ENCODE measurements at regions of chr11 and their contacts with region 1.

Region 1: DNA sequence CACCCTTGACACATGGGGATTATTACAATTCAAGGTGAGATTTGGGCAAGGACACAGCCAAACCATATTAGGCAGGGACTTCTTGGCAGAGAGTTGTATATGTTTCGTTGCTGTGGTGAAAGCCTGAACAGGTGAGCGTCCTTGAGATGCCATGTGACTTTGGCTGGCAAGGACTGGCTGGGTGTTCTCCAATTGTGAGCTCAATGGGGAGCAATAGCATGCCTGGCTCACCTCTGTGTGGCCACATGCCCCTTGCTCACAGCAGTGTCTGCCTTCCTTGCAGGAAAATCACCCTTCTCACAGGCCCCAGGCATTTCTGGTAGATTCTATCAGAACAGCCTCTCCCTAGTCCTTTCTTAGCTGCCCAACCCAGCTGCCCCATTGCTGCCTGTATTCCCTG is 105.5 kb downstream of the PARVA start:
- DNase-seq: no peak
- H3K4me3 ChIP-seq: no peak overlapping the region
- CTCF ChIP-seq: no peak

Region 2: GRCh38 chr11:12361682-12362081 is 121.2 kb before region 1 on chr11:
- in situ Hi-C with region 1: no loop called
- DNase-seq: no peak
- H3K4me3 ChIP-seq: no peak overlapping the region
- CTCF ChIP-seq: no peak

Region 3: DNA sequence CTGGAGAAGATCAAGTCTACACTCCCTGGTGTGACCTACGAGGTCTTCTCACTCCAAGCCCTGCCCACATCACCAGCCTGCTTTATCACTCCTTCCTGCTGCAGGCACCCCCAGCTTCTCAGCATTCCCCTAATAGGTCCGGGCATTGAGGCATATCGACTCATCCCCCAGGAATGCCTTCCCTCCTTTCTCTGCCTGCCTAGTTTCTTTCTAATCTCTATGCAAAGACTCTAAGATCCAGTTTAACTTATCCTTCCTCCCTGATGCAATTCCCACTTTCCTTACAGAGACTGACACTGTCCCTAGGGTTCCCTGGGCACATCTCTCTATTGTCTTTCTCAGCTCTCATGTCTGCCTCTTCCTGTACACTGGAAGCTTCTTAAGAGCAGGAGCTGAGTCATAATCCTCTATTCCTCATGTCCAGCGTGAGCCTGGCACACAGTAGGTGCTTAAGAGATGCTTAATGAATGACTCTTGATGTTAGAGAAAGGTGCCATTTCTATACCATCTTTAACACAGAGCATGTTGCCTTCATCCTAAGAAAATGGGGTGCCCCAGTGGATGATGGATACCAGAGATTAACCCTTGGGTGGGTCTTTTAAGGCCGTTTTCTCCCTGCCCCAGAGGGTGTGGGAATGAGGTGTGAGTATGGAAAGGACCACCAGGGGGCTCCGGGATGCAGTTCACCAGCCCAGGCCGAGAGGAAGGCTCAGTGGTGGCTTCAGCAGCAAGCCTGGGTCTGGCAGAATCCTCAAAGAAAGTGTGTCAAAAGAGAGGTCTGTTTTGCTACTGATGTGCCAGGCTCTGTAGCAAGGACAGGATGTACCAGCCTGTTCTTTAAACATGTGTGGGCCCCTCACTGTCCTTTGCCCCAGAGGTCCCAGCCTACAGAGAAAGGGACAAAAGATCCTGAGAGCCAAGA is 70.8 kb before region 1 on chr11:
- in situ Hi-C with region 1: loop called (anchors 5 kb)
- DNase-seq: peak; percentile 73
- H3K4me3 ChIP-seq: no peak overlapping the region
- CTCF ChIP-seq: peak; percentile 85

Measured in astrocyte of the cerebellum (primary cell).